ENCODE measurements at regions of chr19 and their contacts with region 1.

Region 1: DNA sequence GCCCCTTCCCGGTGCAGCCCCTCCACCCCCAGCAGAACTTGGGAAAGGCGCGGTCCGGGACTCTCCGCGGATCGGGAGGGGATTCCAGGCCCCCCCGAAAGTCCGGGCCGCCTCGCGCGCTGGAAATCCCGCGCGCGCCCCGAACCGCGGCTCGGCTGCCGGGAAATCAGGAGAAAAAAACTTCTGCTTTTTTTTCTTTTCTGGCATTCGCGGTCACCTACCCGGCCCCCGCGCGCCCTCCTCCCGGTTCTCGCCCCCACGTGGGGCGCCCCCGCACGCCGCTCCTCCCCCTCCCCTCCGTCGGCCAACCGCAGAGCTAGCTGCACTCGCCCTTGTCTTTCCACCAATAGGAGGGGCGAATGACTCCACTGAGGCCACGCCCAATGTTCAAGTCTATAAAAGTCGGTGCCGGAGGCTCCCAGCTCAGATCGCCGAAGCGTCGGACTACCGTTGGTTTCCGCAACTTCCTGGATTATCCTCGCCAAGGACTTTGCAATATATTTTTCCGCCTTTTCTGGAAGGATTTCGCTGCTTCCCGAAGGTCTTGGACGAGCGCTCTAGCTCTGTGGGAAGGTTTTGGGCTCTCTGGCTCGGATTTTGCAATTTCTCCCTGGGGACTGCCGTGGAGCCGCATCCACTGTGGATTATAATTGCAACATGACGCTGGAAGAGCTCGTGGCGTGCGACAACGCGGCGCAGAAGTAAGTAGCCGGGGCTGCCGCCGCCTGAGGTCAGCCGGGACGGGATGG is at the start of gene GADD45B:
- DNase-seq: peak; percentile 89 to 99
- H3K4me3 ChIP-seq: peak within 1 kb of the TSS; percentile 94 to 98
- H3K27ac ChIP-seq: peak within 1 kb of the TSS; percentile 88 to 95
- H3K4me1 ChIP-seq: peaks cover 3 to 16% of the 10 kb centered on the region in 2 donors
- H3K27me3 ChIP-seq: no peaks in the 10 kb centered on the region
- CTCF ChIP-seq: peak in 1 of 3 experiments; percentile 19
- total RNA-seq, gene GADD45B: 514 TPM

Region 2: DNA sequence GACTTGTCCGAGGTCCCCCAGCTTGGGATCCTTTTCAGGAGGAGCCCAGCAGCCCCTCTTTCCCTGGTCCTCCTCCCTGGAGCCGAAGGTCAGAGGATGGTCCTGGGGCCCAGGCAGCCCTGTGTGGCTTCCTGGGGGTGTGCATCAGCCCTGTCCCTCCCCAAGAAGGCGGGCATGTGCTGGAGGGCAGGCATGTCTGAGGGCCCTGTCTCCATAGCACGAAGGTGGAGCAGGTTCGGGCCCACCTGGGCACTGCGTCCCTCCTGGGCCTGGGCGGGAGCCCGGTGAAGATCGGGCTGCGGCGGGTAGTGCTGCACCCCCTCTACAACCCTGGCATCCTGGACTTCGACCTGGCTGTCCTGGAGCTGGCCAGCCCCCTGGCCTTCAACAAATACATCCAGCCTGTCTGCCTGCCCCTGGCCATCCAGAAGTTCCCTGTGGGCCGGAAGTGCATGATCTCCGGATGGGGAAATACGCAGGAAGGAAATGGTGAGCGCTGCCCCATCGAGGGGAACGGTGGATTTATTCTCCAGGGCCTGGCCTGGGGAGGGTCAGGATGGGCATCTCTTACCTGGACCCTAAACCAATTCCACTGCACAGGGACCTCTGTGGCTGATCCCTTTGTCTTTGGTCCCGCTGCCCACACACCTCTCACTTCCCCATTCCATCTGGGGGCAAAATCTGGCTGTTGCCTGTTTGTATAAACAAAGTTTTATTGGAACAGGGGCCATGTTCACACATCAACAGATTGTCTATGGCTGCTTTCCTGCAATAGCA is 59.4 kb before region 1 on chr19:
- intact Hi-C with region 1: no loop called
- DNase-seq: no peak
- H3K4me3 ChIP-seq: no peak overlapping the region
- H3K27ac ChIP-seq: no peak overlapping the region
- H3K4me1 ChIP-seq: no peaks in the 10 kb centered on the region
- H3K27me3 ChIP-seq: no peaks in the 10 kb centered on the region
- CTCF ChIP-seq: no peak

Region 3: GRCh38 chr19:2461751-2462634 is 13.9 kb before region 1 on chr19:
- intact Hi-C with region 1: no loop called
- DNase-seq: no peak
- H3K4me3 ChIP-seq: peak overlapping the region; percentile 51 to 80
- H3K27ac ChIP-seq: no peak overlapping the region
- H3K4me1 ChIP-seq: peaks cover 7 to 19% of the 10 kb centered on the region in 2 donors
- H3K27me3 ChIP-seq: no peaks in the 10 kb centered on the region
- CTCF ChIP-seq: peak in 1 of 3 experiments; percentile 30

Region 4: GRCh38 chr19:2494444-2495129 is 18.7 kb after region 1 on chr19:
- intact Hi-C with region 1: loop called (anchors 1 kb)
- DNase-seq: peak; percentile 69 to 95
- H3K4me3 ChIP-seq: peak overlapping the region; percentile 45 to 68
- H3K27ac ChIP-seq: peak overlapping the region; percentile 84 to 94
- H3K4me1 ChIP-seq: peaks cover 7 to 19% of the 10 kb centered on the region in 2 donors
- H3K27me3 ChIP-seq: no peaks in the 10 kb centered on the region
- CTCF ChIP-seq: no peak

Region 5: DNA sequence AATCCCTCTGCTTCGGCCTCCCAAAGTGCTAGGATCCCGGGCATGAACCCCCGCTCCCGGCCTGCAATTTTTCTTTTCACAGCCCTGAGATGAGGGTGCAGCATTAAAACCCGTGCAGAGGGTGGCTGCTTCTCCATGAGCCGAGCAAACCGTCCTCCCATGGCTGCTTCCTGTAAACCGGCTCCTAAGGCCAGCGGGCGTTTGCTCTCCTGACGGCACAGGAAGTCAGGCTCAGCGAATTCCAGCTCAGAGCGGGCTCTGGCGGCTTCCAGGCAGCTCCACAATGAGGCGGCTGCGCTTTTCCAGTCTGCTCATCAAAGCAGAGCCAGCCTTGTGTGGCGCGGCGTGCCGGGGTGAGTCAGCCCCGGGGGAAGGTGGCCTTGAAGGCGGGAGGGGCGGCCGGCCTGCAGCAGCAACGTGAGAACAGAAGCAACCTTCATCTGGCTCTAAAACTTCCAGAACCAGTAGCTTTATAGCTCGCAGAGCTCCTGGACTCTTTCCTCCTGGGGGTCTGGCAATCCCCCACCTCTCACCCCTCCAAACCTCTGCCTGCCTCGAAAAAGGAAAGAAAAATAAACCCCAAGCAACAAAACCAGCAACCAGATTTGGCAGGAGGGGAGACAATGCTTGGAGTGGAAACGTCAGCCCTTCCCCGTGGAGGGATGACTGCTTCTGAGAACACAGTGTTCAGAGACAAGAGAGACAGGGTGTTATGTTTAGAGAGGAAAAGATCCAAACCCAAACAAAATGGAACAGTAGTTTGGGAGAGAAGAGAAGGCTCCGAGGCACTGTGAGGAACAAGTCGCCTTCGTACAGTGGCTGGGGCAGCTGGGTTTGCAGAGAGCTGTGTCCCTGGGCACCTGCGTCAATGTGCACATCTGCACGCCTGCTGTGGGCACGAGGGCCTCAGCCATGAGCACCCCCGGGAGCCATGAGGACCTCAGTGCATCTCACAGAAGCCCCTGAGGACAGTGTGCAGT is 67.9 kb after region 1 on chr19:
- intact Hi-C with region 1: loop called (anchors 1 kb)
- DNase-seq: peak; percentile 87 to 98
- H3K4me3 ChIP-seq: peak overlapping the region in 1 of 2 donors; percentile 49
- H3K27ac ChIP-seq: peak overlapping the region; percentile 90 to 97
- H3K4me1 ChIP-seq: peaks cover 39 to 65% of the 10 kb centered on the region in 2 donors
- H3K27me3 ChIP-seq: no peaks in the 10 kb centered on the region
- CTCF ChIP-seq: peak in 1 of 3 experiments; percentile 21

Region 6: DNA sequence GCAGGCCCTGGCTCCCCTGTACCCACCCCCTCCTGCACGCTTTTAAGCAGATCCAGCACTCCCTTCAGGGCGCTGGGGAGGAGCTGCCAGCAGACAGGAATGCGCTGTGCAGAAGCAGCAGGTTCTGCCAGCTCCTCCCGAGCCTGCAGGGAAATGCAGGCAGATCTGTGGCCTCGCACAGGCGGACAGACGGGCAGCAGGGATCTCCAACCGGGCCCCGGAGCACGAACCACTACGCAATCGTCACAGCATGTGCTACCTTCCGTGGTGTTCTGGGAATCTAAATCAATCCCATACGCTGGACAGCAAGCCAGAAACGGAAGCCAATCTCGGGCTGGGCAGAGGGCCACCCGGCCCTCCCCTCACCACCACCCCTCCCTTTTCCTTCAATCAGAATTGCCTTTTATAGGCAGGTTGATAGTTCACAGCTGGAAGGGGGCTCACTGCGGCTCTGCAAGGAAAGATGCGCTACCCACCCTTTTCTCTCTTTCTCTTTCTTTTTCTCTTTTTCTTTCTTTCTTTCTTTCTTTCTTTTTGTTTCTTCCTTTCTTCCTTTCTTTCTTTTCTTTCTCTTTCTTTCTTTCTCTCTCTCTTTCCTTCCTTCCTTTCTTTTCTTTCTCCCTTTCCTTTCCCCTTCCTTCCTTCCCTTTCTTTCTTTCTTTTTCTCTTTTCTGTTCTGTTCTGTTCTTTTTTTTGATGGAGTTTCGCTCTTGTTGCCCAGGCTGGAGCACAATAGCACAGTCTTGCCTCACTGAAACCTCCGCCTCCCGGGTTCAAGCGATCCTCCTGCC is 126.7 kb after region 1 on chr19:
- intact Hi-C with region 1: loop called (anchors 2 kb)
- DNase-seq: peak; percentile 81 to 96
- H3K4me3 ChIP-seq: peak overlapping the region; percentile 38 to 55
- H3K27ac ChIP-seq: peak overlapping the region; percentile 92 to 97
- H3K4me1 ChIP-seq: peaks cover 17 to 23% of the 10 kb centered on the region in 2 donors
- H3K27me3 ChIP-seq: no peaks in the 10 kb centered on the region
- CTCF ChIP-seq: no peak

Region 7: GRCh38 chr19:2627319-2627829 is 151.5 kb after region 1 on chr19:
- intact Hi-C with region 1: loop called (anchors 5 kb)
- DNase-seq: peak; percentile 93 to 98
- H3K4me3 ChIP-seq: no peak overlapping the region
- H3K27ac ChIP-seq: peak overlapping the region; percentile 90 to 95
- H3K4me1 ChIP-seq: peaks cover 17 to 18% of the 10 kb centered on the region in 2 donors
- H3K27me3 ChIP-seq: no peaks in the 10 kb centered on the region
- CTCF ChIP-seq: no peak

Measured in ascending aorta (tissue), 2 donors.